Heart right ventricle (tissue), 16 donors: ENCODE measurements at regions of chr3 and their contacts with region 1.

Region 1: GRCh38 chr3:44913868-44914468 is 39.6 kb downstream of the TGM4 start:
- DNase-seq: peak; percentile 44 to 65
- ATAC-seq: peak in 7 of 8 donors; percentile 52 to 75 (median 66)
- H3K4me3 ChIP-seq: no peak overlapping the region
- H3K27ac ChIP-seq: no peak overlapping the region
- H3K4me1 ChIP-seq: peaks cover 0 to 15% (median 7%) of the 10 kb centered on the region in 9 donors
- H3K27me3 ChIP-seq: peaks cover 0 to 10% (median 0%) of the 10 kb centered on the region in 7 donors
- CTCF ChIP-seq: peak; percentile 62 to 85 (median 83)

Region 2: DNA sequence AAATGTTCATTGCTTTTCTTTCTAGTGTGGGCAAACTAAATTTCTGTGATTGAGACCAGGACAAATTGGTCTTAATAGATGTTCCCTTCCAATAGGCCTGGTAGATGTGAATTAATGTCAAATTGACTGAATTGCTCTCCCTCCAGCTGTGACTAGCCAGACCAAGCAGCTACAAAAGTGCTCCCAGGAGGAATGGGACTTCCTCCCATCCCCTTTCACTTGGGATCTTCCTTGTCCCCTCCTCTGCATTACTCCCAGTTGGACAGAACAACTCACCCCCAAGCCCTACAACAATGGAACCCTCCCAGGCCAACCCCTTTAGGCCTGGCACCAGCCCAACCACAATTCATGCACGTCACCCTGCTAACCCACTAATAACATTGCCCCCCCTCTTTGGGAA is 378.6 kb before region 1 on chr3:
- intact Hi-C with region 1: loop called (anchors 2 to 5 kb)
- DNase-seq: no peak
- ATAC-seq: no peak
- H3K4me3 ChIP-seq: no peak overlapping the region
- H3K27ac ChIP-seq: no peak overlapping the region
- H3K4me1 ChIP-seq: no peaks in the 10 kb centered on the region
- H3K27me3 ChIP-seq: peaks cover 0 to 55% (median 39%) of the 10 kb centered on the region in 7 donors
- CTCF ChIP-seq: no peak

Region 3: GRCh38 chr3:44966750-44967278 is 52.8 kb after region 1 on chr3:
- intact Hi-C with region 1: no loop called
- DNase-seq: no peak
- ATAC-seq: no peak
- H3K4me3 ChIP-seq: no peak overlapping the region
- H3K27ac ChIP-seq: peak overlapping the region in 1 of 10 donors; percentile 29
- H3K4me1 ChIP-seq: peaks cover 3 to 74% (median 44%) of the 10 kb centered on the region in 9 donors
- H3K27me3 ChIP-seq: no peaks in the 10 kb centered on the region
- CTCF ChIP-seq: no peak